ENCODE measurements at regions of chr4 and their contacts with region 1.

Region 1: DNA sequence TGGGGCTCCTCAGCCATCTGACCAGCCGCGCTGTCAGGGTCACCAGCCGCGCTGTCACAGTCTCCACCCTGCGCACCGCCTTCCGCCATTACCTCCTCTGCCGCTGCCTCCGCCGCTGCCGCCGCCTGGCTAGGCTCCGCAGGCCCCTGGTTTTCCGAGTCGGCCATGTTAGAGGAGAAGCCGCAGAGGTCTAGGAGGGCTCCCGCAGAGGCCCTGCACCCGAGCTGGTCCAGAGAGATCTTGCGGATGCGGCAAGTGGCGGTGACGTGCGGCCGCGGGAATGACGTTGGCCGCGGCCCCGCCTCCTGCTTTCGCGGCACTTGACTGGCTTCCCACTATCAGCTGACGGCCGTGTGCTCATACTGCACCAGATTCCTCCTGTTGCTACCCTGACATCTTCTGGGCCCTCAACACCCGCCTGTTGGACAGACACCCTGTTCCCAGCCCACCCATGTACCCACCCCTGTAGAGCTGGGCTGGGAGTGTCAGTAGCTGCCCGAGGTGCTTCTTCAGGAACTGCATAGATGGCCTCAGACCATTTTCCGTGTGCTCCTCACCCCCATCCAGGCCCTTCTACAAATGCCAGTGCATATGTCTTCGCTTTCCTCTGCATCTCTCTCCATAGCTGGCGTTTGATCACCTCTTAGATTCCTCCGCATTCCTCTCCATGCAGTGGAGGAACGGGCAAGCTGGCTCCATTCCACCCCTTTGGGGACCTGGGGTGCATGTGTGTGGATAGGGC is at the start of gene NAP1L5:
- DNase-seq: peak in 1 of 2 experiments; percentile 14
- H3K4me3 ChIP-seq: peak within 1 kb of the TSS; percentile 48; the same call in 1 of the 2 replicates
- H3K27ac ChIP-seq: no peak within 1 kb of the TSS
- H3K4me1 ChIP-seq: no peaks in the 10 kb centered on the region
- H3K27me3 ChIP-seq: no peaks in the 10 kb centered on the region
- CTCF ChIP-seq: no peak
- total RNA-seq, gene NAP1L5: 0.28 and 0.37 TPM in 2 replicates

Region 2: DNA sequence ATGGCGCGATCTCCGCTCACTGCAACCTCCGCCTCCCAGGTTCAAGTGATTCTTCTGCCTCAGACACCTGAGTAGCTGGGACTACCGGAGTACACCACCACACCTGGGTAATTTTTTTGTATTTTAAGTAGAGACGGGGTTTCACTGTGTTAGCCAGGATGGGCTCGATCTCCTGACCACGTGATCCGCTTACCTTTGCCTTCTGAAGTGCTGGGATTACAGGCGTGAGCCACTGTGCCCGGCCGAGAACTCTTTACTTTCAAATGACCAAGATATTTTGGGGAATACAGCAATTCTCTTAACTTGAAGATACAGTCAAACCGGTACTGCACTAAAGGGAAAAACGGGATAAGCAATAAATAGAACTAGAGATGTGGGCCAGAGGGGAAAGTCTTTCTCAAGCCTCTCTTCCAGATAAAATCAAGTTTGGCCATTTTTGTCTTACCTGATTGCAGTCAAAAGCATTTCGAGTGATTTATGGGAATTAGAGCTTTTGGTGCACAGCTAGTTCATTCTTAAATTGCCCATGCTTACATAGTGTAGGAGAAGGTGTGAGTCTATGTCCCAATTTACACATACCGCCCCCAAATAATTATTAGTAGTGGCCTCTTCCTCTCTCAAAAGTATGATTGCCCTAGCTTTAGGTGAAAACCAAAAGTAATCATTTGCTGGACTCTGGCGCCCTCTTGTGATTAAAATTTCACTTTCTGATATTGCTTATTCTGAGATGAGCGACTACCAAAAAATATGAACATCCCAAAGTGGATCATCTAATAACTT is 486.1 kb before region 1 on chr4:
- CTCF ChIA-PET with region 1: no interaction called
- POLR2A ChIA-PET with region 1: no interaction called
- intact Hi-C with region 1: no loop called
- DNase-seq: peak; percentile 37 to 39
- H3K4me3 ChIP-seq: no peak overlapping the region
- H3K27ac ChIP-seq: no peak overlapping the region
- H3K4me1 ChIP-seq: peaks cover 6% of the 10 kb centered on the region
- H3K27me3 ChIP-seq: no peaks in the 10 kb centered on the region
- CTCF ChIP-seq: peak; percentile 78

Region 3: DNA sequence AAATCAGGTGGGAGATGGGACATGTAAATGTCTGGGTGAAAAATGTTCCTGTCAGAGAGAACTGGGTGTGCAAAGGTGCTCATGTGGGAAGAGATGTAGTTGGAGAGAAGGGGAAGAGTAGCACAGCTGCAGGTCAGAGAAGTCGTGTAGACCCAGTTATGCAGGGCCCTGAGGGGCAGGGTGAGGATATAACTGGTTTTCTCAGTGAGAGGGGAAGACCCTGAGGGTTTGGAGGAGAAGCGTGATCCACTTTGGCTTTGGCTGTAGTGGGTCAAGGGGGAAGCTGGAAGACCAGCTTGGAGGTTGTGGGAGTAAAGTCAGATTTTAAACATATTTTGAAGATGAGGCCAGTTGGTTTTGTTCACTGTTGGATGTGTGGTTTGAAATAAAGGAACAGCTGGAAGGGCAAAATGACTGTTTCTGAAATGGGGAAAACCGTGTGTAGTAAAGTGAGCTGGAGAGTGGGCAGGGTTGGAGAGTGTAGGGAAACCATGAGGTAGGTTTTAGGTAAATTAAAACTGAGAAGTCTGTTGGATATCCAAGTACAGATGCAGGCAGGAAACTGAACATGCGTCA is 44.3 kb before region 1 on chr4:
- CTCF ChIA-PET with region 1: no interaction called
- POLR2A ChIA-PET with region 1: no interaction called
- intact Hi-C with region 1: no loop called
- DNase-seq: no peak
- H3K4me3 ChIP-seq: no peak overlapping the region
- H3K27ac ChIP-seq: no peak overlapping the region
- H3K4me1 ChIP-seq: no peaks in the 10 kb centered on the region
- H3K27me3 ChIP-seq: no peaks in the 10 kb centered on the region
- CTCF ChIP-seq: no peak

Region 4: DNA sequence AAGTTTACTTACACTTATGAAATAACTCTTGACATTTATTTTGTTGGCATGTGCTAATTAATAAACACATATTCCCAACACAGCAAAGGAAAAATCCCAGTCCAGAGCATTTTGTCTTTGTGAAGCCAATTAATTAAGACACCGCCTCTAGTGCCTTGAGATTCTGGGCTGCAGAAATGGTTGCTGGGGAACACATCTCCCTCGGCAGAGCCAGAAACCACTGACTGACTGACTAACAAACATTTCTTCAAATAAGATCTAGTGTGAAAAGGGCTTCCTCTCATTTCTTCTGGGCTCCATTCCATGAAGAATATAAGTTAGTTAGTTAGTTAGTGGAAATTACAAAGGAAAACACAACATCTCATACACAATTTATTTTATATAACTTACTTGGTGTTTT is 28.2 kb after region 1 on chr4:
- CTCF ChIA-PET with region 1: interaction called, 11 read pairs
- POLR2A ChIA-PET with region 1: no interaction called
- intact Hi-C with region 1: no loop called
- DNase-seq: no peak
- H3K4me3 ChIP-seq: no peak overlapping the region
- H3K27ac ChIP-seq: no peak overlapping the region
- H3K4me1 ChIP-seq: no peaks in the 10 kb centered on the region
- H3K27me3 ChIP-seq: no peaks in the 10 kb centered on the region
- CTCF ChIP-seq: no peak